Naive thymus-derived CD4-positive, alpha-beta T cell (primary cell): ENCODE measurements at regions of chr3 and their contacts with region 1.

Region 1: GRCh38 chr3:114308830-114309229 is 15.0 kb downstream of the TIGIT start:
- DNase-seq: peak in 2 of 9 donors; percentile 20 to 21
- ATAC-seq: peak; percentile 89
- H3K4me3 ChIP-seq: peak overlapping the region; percentile 14
- H3K4me3 Mint-ChIP-seq: peak overlapping the region in 6 of 10 donors; percentile 7 to 51 (median 26)
- H3K27ac ChIP-seq: peak overlapping the region; percentile 54
- H3K27ac Mint-ChIP-seq: peak overlapping the region in 8 of 9 donors; percentile 3 to 88 (median 52)
- H3K4me1 ChIP-seq: peaks cover 10 to 68% of the 10 kb centered on the region in 2 donors
- H3K4me1 Mint-ChIP-seq: peaks cover 13 to 35% (median 20%) of the 10 kb centered on the region in 7 donors
- H3K27me3 ChIP-seq: no peaks in the 10 kb centered on the region
- H3K27me3 Mint-ChIP-seq: no peaks in the 10 kb centered on the region

Region 2: DNA sequence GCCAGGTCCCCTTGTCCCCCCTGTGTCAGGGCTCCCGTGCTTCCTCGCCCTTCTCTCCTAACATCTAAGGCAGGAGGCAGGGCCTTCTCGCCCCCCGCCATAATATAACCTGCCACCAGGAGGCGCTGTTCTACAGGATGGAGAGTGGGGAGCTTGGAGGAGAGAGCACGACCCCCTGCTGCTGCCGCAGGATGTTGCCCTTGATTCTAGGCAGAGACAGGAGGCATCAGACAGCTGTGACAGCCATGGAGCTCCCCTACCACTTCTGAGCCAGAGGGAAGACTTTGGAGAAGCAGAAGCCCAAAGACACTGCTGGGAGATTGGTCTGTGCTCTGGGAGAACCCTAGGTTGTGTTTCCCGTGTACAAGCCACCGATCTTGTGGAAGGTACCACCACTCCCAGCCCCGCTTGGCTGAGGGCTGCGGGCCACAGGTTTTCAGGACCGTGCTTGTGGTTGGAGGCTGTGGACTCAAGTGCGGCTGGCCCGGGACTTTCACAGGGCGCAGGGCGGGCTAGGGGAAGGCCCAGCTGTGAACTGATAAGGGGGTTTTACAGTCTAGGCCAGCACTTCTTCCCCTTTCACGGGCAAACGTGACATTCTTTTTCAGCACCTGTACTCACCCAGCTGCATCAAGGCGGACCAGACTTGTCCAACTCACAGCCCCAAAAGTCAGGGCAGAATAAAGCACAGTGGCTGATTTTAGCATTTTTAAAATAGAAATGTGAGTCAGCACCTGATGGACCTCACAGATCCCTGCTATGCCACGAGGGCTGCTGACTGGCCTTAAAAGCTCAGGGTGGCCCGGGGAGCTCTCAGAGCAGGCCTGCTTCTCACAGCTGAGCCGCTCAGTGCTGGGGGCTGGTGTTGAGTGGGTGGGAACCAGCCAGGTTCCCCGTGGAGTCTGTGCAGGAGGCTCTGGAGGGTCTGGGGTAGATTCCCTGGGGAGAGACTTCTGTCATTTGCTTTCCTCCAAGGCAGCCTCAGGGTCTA is 17.6 kb before region 1 on chr3:
- CTCF ChIA-PET with region 1: interaction called, 6 read pairs
- POLR2A ChIA-PET with region 1: interaction called, 5 read pairs
- intact Hi-C with region 1: loop called in 1 of 2 experiments (anchors 2 kb)
- DNase-seq: peak; percentile 61 to 85 (median 77)
- ATAC-seq: peak; percentile 88
- H3K4me3 ChIP-seq: peak overlapping the region; percentile 37
- H3K4me3 Mint-ChIP-seq: peak overlapping the region in 6 of 10 donors; percentile 7 to 66 (median 52)
- H3K27ac ChIP-seq: peak overlapping the region; percentile 51
- H3K27ac Mint-ChIP-seq: peak overlapping the region in 7 of 9 donors; percentile 27 to 80 (median 59)
- H3K4me1 ChIP-seq: peaks cover 4 to 42% of the 10 kb centered on the region in 2 donors
- H3K4me1 Mint-ChIP-seq: peaks cover 0 to 18% (median 5%) of the 10 kb centered on the region in 7 donors
- H3K27me3 ChIP-seq: no peaks in the 10 kb centered on the region
- H3K27me3 Mint-ChIP-seq: no peaks in the 10 kb centered on the region

Region 3: GRCh38 chr3:114329823-114330222 is 21.0 kb after region 1 on chr3:
- CTCF ChIA-PET with region 1: no interaction called
- POLR2A ChIA-PET with region 1: no interaction called
- intact Hi-C with region 1: loop called in 1 of 2 experiments (anchors 2 kb)
- DNase-seq: no peak
- ATAC-seq: no peak
- H3K4me3 ChIP-seq: no peak overlapping the region
- H3K4me3 Mint-ChIP-seq: no peak overlapping the region
- H3K27ac ChIP-seq: no peak overlapping the region
- H3K27ac Mint-ChIP-seq: no peak overlapping the region
- H3K4me1 ChIP-seq: peaks cover 0 to 42% of the 10 kb centered on the region in 2 donors
- H3K4me1 Mint-ChIP-seq: peaks cover 0 to 34% (median 8%) of the 10 kb centered on the region in 7 donors
- H3K27me3 ChIP-seq: no peaks in the 10 kb centered on the region
- H3K27me3 Mint-ChIP-seq: no peaks in the 10 kb centered on the region

Region 4: DNA sequence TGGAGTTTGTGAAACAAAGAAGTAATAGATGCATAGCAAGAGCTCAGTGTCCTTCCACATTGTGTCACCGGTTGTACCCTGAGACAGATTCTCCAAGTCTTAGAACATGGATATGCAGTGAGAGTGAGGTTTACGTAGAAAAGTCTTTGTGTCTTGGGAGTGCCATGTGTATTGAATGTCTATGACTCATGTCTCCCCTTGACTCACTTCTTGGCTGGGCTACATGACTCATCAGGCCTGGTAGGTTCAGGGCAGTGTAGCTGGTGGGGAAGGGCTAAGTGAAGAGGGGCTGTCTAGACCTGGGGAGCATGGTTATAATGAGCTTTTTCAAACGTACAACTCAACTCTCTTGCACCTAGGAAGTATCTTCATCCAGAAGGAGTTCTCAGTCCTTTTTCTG is 1481.9 kb after region 1 on chr3:
- CTCF ChIA-PET with region 1: no interaction called
- POLR2A ChIA-PET with region 1: no interaction called
- intact Hi-C with region 1: no loop called
- DNase-seq: peak in 2 of 9 donors; percentile 23 to 48
- ATAC-seq: peak; percentile 33
- H3K4me3 ChIP-seq: no peak overlapping the region
- H3K4me3 Mint-ChIP-seq: peak overlapping the region in 4 of 10 donors; percentile 3 to 23 (median 20)
- H3K27ac ChIP-seq: no peak overlapping the region
- H3K27ac Mint-ChIP-seq: peak overlapping the region in 5 of 9 donors; percentile 18 to 81 (median 74)
- H3K4me1 ChIP-seq: peaks cover 7% of the 10 kb centered on the region in 2 donors
- H3K4me1 Mint-ChIP-seq: peaks cover 7 to 25% (median 16%) of the 10 kb centered on the region in 7 donors
- H3K27me3 ChIP-seq: no peaks in the 10 kb centered on the region
- H3K27me3 Mint-ChIP-seq: peaks cover 0 to 5% (median 0%) of the 10 kb centered on the region in 5 donors